ENCODE measurements at regions of chr9 and their contacts with region 1.

Region 1: DNA sequence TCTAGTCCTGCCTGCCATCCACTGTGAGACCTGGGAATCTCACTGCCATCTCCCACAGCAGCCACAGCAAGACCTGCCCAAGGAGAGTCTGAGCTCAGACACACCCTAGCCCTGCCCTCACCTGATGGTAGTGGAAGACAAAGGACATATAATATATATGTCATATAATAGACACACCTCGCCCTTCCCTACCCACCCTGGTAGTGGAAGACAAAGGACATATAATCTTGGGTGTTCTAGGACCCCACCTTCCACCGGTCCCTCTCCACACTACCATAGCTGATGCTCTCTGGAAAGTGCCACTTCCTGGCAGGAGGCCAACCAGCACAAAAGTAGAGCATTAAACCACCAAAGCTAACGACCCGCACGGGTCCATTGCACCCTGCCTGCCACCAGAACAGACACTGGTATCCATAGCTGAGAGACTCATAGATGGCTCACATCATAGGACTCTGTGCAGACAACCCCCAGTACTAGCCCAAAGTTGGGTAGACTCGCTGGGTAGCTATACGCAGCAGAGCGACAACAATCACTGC is 545.6 kb downstream of the CAAP1 start:
- DNase-seq: no peak
- ATAC-seq: no peak
- H3K4me3 ChIP-seq: no peak overlapping the region
- H3K27ac ChIP-seq: no peak overlapping the region
- H3K4me1 ChIP-seq: no peaks in the 10 kb centered on the region
- H3K27me3 ChIP-seq: no peaks in the 10 kb centered on the region
- CTCF ChIP-seq: no peak

Region 2: GRCh38 chr9:26394025-26394424 is 47.0 kb after region 1 on chr9:
- intact Hi-C with region 1: loop called in 1 of 10 experiments (anchors 1 kb)
- DNase-seq: no peak
- ATAC-seq: no peak
- H3K4me3 ChIP-seq: no peak overlapping the region
- H3K27ac ChIP-seq: no peak overlapping the region
- H3K4me1 ChIP-seq: no peaks in the 10 kb centered on the region
- H3K27me3 ChIP-seq: no peaks in the 10 kb centered on the region
- CTCF ChIP-seq: no peak

Measured in heart right ventricle (tissue), 16 donors.